K562 (cell line): ENCODE measurements at regions of chr3 and their contacts with region 1.

Region 1: GRCh38 chr3:149765762-149766334 is 13.6 kb upstream of the COMMD2 start:
- DNase-seq: peak in 1 of 4 experiments; percentile 10
- ATAC-seq: no peak
- H3K4me3 ChIP-seq: no peak overlapping the region
- H3K27ac ChIP-seq: no peak overlapping the region
- H3K4me1 ChIP-seq: no peaks in the 10 kb centered on the region
- H3K27me3 ChIP-seq: peaks cover 7 to 14% of the 10 kb centered on the region in 2 experiments; a peak in 3 of 5 replicates
- CTCF ChIP-seq: peak; percentile 24 to 54 (median 27); a peak in 3 of 6 replicates
- EP300 ChIP-seq: no peak
- POLR2A ChIP-seq: no peak
- RAD21 ChIP-seq: peak; percentile 23 to 48; a peak in 2 of 4 replicates

Region 2: DNA sequence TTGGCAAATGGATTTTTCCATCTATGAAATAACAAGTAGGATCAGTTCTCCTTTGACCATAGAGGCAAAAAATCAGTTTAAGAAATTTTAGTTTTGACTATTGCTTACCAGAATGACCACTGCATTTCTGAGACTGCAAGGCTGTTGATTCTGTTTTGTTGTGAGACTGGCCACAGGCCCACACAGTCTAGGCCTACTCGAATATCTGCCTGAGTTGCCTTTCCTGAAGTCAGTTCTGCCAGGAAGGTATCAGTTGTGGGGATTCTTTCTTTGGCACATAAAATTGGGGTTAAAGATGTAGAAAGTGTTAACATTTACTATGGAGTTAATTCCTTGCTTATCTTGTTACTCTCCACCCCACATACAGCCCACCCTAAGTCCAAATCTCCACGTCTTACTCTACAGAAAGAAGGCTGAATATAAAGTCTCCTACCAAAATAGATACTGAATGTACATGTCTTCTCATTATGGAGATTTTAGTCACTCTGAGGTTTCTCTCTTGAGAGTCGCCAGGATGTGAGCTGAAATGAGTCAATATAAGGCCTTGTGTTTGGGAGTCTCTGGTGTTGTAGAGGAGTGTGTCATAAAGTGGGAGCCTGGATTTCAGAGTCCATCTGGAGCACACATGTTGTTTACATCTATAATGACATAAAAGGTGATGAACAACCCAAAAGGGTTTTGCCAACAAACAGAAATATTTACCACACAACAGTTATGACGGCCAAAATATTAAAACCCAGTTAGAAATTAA is 63.0 kb before region 1 on chr3:
- CTCF ChIA-PET with region 1: no interaction called
- POLR2A ChIA-PET with region 1: no interaction called
- in situ Hi-C with region 1: no loop called
- intact Hi-C with region 1: no loop called
- DNase-seq: no peak
- ATAC-seq: no peak
- H3K4me3 ChIP-seq: no peak overlapping the region
- H3K27ac ChIP-seq: no peak overlapping the region
- H3K4me1 ChIP-seq: no peaks in the 10 kb centered on the region
- H3K27me3 ChIP-seq: no peaks in the 10 kb centered on the region
- CTCF ChIP-seq: no peak
- EP300 ChIP-seq: no peak
- POLR2A ChIP-seq: no peak
- RAD21 ChIP-seq: no peak

Region 3: DNA sequence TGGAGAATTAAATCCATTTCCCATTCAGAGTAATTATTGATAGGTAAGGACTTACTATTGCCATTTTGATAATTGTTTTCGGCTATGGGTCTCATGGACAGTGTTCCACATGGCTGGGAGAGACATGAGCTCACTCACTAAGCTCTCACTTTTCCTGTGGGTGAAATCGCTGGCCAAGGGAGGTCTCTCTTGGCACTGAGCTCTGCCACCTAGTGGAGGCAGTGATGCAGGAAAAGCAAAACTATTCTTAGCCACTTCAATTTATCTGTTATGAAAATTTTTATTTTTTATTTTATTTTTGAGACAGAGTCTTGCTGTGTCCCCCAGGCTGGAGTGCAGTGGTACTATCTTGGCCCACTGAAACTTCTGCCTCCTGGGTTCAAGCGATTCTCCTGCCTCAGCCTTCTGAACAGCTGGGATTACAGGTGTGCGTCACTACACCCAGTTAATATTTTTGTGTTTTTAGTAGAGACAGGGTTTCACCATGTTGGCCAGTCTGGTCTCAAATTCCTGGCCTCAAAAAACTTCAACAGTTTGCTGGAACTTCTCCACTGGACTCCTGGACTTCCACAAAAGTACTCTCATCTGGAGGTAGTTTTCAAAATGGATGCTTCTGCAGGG is 42.5 kb after region 1 on chr3:
- CTCF ChIA-PET with region 1: interaction called, 4 read pairs
- POLR2A ChIA-PET with region 1: no interaction called
- in situ Hi-C with region 1: no loop called
- intact Hi-C with region 1: loop called (anchors 5 kb)
- DNase-seq: peak; percentile 23 to 71 (median 39)
- ATAC-seq: peak; percentile 75
- H3K4me3 ChIP-seq: no peak overlapping the region
- H3K27ac ChIP-seq: no peak overlapping the region
- H3K4me1 ChIP-seq: peaks cover 0 to 8% of the 10 kb centered on the region in 2 experiments; a peak in 2 of 5 replicates
- H3K27me3 ChIP-seq: no peaks in the 10 kb centered on the region
- CTCF ChIP-seq: peak; percentile 66 to 79 (median 76)
- EP300 ChIP-seq: no peak
- POLR2A ChIP-seq: no peak
- RAD21 ChIP-seq: peak; percentile 46 to 52